Common myeloid progenitor, CD34-positive (primary cell): ENCODE measurements at regions of chr6 and their contacts with region 1.

Region 1: GRCh38 chr6:125858427-125859320 is 67.9 kb downstream of the NCOA7 start:
- DNase-seq: peak; percentile 59 to 67 (median 66)
- H3K4me3 ChIP-seq: no peak overlapping the region
- H3K27ac ChIP-seq: no peak overlapping the region
- H3K4me1 ChIP-seq: peaks cover 1 to 3% (median 2%) of the 10 kb centered on the region in 4 experiments
- H3K27me3 ChIP-seq: no peaks in the 10 kb centered on the region

Region 2: DNA sequence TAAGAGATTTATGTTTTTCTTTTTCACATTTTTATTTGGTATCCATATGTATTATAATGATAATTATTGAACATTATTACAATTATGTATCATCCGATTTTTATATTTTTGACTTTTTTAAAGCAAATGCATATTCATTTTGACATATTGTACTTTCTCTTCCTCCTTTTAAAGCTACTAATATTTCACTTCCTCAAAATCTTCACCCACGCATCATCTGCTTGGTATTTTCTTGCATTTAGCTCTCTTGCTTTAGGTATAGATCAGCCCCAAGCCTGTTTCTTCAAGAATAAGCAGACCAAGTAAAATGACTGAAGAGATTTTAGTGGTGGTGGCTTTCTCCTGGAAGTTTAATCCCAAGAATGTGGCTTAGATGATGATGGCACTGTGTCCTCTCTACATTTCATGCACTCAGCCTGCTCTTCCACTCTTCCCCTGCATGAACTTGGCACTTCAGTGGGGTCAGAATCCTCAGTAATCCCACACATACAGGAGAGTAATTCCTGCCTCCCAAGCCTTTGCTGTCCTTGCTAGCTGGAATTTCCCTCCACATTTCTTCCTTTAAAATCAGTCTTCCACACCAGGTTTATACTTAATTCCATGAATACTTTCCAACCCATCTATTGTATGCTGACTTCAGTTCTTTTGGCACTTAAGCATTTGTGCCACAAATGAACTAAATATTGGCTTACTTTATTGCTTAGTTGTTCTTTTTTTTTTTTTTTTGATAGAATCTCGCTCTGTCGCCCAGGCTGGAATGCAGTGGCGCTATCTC is 59.8 kb before region 1 on chr6:
- CTCF ChIA-PET with region 1: interaction called, 20 read pairs
- POLR2A ChIA-PET with region 1: no interaction called
- DNase-seq: peak in 2 of 3 donors; percentile 75 to 87
- H3K4me3 ChIP-seq: peak overlapping the region in 1 of 7 experiments; percentile 11
- H3K27ac ChIP-seq: no peak overlapping the region
- H3K4me1 ChIP-seq: peaks cover 33 to 65% (median 48%) of the 10 kb centered on the region in 4 experiments
- H3K27me3 ChIP-seq: no peaks in the 10 kb centered on the region